ENCODE measurements at regions of chr9 and their contacts with region 1.

Region 1: DNA sequence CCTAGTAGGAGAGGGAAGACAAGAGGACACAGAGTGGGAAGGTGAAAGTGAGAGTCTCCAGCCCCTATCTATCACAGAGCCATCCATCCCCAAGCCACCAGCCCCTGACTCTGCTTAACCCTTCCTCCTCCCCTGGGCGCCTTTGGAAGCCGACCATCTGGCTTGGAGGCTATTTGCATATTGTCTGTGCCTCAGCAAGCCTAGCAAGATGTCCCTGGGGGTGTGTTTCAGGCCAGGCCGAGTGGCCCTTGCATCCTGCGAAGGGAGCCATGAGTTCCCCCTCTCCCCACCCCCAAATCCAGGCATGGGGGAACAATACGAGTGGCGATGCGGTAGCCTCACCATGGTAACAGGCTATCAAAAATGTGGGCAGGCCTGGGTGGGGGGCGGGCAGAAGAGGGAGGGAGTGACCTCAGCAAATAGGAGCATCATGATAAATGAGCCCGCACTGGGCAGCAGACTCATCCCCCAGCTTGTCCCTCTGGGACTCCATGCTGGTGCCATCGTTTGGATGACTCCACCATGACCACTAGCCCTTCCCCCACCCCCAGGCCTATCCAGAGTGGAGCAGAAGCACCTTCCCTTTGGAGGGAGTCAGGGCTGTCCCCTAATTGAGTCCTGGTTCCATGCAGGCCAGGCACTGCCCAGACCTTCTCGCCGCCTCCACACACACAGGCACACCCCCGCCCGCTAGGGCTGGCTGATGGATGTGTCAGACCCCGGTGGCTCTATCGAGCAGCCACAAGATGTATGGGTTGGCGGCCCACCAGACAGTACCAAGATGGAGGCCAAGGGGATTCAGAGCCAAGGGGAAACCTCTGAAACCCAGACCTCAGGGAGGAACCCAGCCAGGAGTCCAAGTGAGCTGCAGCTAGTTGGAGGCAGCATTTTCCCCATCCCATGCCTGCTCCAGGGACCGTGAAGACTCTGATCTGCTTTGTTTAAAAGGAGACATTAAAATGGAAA is 14.6 kb downstream of the URM1 start:
- DNase-seq: no peak

Region 2: DNA sequence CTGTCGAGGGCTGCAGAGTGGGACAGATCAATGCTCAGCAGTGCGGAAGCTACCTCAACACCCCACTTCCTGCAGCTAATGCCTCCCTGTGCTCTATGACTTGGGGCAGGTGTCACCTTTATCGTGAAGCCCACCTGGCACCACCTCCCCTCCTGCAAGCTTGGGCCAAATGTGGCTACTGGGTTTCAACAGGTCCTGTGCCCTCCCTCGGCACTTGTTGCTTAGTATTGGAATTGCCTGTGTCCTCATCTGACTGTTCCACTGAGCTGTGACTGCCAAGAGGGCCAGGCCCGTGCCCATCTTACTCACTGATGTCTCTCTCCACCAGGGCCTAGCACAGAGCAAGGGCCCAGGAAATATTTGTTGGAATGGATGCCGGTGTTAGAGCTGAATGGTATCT is 36.0 kb before region 1 on chr9:
- intact Hi-C with region 1: loop called in 1 of 2 experiments (anchors 2 kb)
- DNase-seq: no peak

Region 3: DNA sequence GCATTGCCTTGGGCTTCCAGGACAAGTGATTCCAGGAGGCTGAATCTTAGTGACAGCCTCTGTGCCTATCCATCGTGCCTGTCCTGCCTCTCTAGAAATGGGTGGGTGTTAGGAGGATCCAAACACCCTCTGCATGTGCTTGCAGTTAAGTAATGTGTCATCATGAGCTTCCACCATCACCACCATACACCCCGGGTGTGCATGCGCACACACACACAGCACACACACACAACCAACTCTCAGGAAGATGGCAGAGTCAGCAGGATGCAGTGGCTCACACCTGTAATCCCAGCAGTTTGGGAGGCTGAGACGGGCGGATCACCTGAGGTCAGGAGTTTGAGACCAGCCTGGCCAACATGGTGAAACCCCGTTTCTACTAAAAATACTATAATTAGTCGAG is 12.1 kb after region 1 on chr9:
- intact Hi-C with region 1: loop called in 1 of 2 experiments (anchors 1 kb)
- DNase-seq: no peak

Region 4: GRCh38 chr9:128656416-128657343 is 270.9 kb after region 1 on chr9 and contains the start of gene DYNC2I2:
- intact Hi-C with region 1: no loop called
- DNase-seq: peak; percentile 99
- total RNA-seq, gene DYNC2I2: 18.1 to 19.4 TPM